ENCODE measurements at regions of chr10 and their contacts with region 1.

Region 1: DNA sequence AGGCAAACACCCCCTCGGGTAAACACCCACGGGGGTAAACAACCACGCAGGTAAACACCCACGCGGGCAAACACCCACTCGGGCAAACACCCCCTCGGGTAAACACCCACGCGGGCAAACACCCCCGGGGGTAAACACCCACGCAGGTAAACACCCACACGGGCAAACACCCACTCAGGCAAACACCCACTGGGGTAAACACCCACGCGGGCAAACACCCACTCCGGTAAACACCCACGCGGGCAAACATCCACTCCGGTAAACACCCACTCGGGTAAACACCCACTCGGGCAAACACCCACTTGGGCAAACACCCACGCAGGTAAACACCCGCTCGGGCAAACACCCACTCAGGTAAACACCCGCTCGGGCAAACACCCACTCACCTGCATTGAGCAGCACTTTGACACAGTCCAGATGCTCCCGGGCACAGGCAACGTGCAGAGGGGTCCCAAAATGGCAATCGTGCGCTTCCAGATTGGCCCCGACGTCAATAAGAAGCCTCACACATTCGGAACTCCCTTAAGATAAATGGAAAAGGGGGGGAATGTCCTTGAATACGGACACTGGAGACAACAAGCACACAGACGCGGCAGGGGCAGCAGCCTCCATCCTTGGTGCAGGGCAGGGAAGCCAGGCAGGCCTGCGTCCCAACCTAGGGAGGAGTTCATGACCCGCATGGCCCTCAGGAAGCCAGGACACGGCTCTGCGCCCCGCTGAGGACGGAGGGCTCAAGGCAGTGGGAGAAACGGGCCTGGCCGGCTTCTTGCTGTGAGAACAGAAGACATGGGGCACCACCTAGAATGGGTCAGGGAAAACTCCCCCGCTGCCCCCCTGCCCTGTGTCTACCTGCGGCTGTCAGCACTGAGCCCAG is 17.6 kb downstream of the ASB13 start:
- DNase-seq: no peak
- ATAC-seq: peak; percentile 51
- H3K4me3 ChIP-seq: no peak overlapping the region
- H3K27ac ChIP-seq: no peak overlapping the region
- H3K4me1 ChIP-seq: no peaks in the 10 kb centered on the region
- H3K27me3 ChIP-seq: no peaks in the 10 kb centered on the region
- CTCF ChIP-seq: no peak

Region 2: DNA sequence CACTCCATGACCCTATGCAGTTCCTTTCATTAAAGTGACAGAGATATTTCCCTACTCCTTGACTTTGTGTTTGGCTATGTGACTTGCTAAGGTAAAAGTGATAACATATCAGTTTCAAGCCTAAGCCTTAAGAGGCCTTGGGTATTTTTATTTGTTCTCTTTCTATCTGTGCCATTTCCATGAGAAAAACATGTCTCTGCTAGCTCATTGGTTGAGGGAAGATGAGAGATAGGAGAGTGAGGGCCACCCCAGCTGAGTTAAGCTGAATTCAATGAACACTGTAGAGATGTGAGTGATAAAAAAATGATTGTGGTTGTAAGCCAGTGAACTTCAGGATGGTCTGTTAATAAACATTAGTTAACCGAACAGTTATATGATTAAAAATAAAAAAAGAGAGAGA is 49.2 kb after region 1 on chr10:
- CTCF ChIA-PET with region 1: interaction called, 10 read pairs
- POLR2A ChIA-PET with region 1: no interaction called
- in situ Hi-C with region 1: no loop called
- intact Hi-C with region 1: no loop called
- DNase-seq: no peak
- ATAC-seq: no peak
- H3K4me3 ChIP-seq: no peak overlapping the region
- H3K27ac ChIP-seq: no peak overlapping the region
- H3K4me1 ChIP-seq: no peaks in the 10 kb centered on the region
- H3K27me3 ChIP-seq: no peaks in the 10 kb centered on the region
- CTCF ChIP-seq: no peak